ENCODE measurements at regions of chr9 and their contacts with region 1.

Region 1: GRCh38 chr9:132800038-132800648 is 77.9 kb downstream of the AK8 start:
- DNase-seq: peak; percentile 87
- ATAC-seq: peak; percentile 73

Region 2: DNA sequence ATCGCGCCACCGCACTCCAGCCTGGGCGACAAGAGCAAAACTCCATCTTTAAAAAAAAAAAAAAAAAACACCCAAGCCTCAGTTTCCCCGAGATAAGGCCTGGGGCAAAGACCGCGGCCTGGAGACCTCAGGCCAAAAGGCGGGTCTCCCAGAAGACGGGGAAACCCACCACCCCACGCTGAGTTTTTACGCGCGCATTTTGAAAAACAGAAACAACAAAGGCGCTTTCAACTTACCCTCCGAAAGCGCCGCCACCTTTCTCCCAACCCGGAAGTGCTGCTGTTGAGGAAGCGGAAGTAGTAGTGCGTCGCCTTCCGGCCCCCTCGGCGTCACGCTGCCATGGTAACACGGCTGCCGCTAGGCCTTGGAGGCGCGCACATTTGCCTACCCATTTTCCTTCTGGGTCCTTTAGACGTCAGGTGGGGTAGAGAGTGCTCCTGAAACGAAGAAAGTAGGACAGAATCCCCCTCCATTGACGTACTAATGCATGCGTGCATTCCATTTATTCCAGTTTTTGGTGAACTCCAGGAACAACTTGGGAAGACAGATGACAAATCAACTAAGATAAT is 393.5 kb before region 1 on chr9 and contains the start of gene TTF1:
- intact Hi-C with region 1: loop called (anchors 2 kb)
- DNase-seq: peak; percentile 95
- ATAC-seq: peak; percentile 77
- total RNA-seq, gene TTF1: 17.2 TPM

Region 3: GRCh38 chr9:132507746-132508469 is 292.2 kb before region 1 on chr9:
- intact Hi-C with region 1: loop called (anchors 2 kb)
- DNase-seq: no peak
- ATAC-seq: peak; percentile 61

Region 4: GRCh38 chr9:132575005-132575609 is 225.0 kb before region 1 on chr9:
- intact Hi-C with region 1: loop called (anchors 5 kb)
- DNase-seq: no peak
- ATAC-seq: peak; percentile 69

Region 5: GRCh38 chr9:132669698-132670456 is 130.3 kb before region 1 on chr9 and contains the start of gene DDX31:
- intact Hi-C with region 1: loop called (anchors 1 kb)
- DNase-seq: peak; percentile 96
- ATAC-seq: peak; percentile 98
- total RNA-seq, gene DDX31: 4.7 TPM

Region 6: DNA sequence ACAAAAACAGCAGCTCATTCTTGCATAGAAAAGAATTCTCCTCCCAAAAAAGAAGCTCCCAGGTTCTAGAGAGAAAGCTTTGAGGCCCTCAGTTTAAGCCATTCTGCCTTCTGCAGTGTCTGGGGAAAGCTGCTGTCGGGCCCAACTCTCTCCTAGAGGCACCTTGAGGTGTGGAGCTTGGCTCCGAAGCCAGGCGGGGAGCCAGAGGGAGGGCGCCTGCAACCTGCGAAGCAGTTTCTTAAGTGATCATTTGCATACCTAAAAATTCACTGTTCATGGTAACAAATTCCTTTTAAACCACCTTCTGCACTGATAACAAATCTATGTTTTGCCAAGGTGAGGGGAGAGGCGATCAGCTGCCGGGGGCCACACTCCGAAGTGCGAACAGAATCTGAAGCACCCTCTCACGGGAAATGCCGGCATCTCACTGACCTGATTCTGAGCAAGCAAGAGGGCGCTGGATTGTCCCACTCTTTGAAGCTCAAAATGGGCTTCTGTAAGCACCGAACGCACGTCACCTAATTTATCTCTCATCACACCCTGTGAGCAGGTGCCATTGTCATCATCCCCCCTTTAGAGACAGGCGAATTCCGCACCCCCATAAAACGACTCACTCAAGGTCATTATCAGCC is 43.8 kb before region 1 on chr9:
- intact Hi-C with region 1: no loop called
- DNase-seq: no peak
- ATAC-seq: peak; percentile 8

Region 7: DNA sequence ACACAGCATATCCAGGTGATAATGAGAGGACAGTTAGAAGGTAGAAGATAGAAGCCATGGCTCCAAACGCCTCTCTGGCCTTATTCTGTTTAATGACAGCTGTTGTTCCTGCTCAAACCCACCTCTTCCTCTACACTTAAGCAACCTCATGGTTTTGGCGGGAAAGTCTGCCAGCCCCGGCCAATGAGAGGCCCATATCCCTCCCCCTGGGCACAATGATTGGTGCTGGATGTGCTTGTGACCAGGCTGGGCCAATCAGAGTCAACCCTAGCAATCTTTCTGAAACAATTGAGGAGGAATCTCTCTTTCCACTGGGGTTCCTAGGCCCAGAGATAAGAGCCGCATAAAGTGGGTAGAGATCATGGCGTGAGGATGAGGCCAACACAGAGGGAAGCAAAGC is 173.6 kb after region 1 on chr9:
- intact Hi-C with region 1: loop called (anchors 10 kb)
- DNase-seq: no peak
- ATAC-seq: no peak

Region 8: DNA sequence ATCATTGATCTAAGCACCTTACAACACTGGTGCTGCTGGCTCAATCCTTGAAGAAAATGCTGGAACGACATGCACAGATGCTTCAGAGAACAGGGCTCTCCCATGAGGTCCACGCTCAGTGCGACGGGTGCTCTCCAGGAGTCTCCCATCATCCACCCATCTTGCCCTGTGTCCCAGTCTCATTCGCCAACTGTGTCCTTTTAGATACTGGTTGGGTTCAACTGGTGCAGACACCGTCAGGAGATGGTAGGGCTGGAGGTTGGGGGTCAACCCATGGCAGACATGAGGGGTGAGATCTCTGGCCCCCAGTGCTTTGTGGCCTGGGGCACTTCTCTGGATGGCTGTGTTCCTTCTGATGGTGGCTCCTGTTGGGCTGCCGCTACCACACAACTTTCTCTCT is 410.5 kb after region 1 on chr9:
- intact Hi-C with region 1: no loop called
- DNase-seq: no peak
- ATAC-seq: no peak

Measured in Right ventricle myocardium inferior (tissue), 1 donor.